Right cardiac atrium (tissue), 5 donors: ENCODE measurements at regions of chr3 and their contacts with region 1.

Region 1: DNA sequence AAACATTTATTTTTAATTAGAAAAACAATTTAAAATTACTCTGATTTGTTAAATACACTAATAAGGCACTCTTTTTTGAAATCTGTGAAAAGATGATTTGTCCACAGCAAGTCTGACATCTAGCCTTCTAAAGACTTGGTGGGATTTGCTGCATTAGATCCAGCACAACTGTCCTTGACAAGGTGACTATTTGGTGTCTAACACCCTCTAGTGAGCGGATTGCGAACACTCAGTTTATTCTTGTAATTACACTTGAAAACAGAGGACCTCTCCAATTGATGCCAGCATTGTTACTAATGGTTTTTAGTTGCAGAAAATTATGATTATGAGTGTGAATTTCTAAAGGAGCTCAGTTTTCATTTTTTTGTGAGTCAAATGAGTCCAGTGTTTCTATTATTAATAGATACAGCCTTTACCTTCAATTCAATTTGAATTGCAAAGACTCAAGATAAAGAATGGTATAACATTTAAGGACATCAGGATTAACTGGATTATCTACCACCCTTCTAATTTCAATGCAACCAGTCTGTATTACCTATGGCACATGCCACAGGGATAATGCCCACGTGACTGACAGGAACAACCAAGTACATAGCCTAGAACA is 29.7 kb upstream of the STRIT1 start:
- DNase-seq: no peak
- ATAC-seq: peak; percentile 57 to 73
- H3K4me3 ChIP-seq: no peak overlapping the region
- H3K27ac ChIP-seq: no peak overlapping the region
- H3K4me1 ChIP-seq: no peaks in the 10 kb centered on the region
- H3K27me3 ChIP-seq: no peaks in the 10 kb centered on the region

Region 2: DNA sequence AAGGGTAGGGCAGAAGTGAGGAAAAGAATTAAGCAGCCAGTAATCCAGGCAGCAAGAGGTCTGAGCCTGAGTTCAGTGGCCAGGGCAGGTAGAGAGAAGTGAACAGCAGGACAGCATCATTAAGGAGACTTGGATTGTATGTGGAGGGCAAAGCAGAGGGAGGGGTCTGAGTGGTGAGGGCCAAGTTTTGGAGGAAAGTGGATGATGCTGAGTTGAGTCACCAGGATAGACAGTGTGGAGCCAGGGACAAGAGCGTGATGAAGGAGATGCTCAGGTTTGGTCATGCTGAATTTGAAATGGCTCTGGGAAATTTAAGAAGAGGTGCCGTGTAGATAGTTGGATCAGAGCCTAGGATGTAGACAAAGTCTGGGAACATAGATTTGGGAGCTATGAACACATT is 1108.9 kb before region 1 on chr3:
- intact Hi-C with region 1: no loop called
- DNase-seq: no peak
- ATAC-seq: no peak
- H3K4me3 ChIP-seq: no peak overlapping the region
- H3K27ac ChIP-seq: no peak overlapping the region
- H3K4me1 ChIP-seq: no peaks in the 10 kb centered on the region
- H3K27me3 ChIP-seq: no peaks in the 10 kb centered on the region

Region 3: GRCh38 chr3:154334973-154335420 is 988.2 kb before region 1 on chr3:
- intact Hi-C with region 1: loop called in 3 of 4 experiments (anchors 10 kb)
- DNase-seq: no peak
- ATAC-seq: no peak
- H3K4me3 ChIP-seq: no peak overlapping the region
- H3K27ac ChIP-seq: no peak overlapping the region
- H3K4me1 ChIP-seq: no peaks in the 10 kb centered on the region
- H3K27me3 ChIP-seq: no peaks in the 10 kb centered on the region

Region 4: DNA sequence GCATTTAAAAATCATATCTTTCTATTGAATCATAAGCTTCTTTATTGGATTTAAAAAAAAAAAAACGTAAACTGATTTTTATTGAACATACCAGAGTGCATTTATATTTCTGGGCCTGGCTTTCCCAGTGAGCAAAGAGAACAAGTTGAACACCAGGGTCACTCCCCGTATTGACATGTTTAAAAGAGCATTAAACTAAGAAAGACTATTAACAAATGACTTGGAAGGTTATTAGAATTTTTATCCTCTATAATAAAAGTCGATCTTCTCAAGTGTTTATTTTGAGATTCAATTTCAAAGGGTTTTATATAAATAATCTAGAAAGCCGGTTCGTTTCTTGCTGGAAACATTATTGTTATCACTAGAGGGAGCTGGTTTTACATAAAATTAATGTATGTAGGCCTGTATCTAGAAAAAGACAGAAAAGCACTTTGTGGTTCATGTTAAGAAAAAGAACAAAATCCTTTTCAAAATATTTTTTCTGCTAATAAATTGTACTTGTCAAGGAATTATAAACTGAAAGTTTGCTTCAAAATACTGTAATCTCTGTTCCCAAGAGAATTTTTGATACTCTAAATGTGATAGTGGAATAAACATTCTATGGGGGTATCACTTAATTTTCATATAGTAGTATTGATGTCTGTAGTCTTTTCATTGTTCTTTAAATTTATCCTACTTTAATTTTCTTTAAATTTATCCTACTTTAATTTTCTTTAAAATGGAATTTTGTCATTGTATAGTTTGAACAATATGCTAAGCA is 564.9 kb before region 1 on chr3:
- intact Hi-C with region 1: loop called in 1 of 4 experiments (anchors 10 kb)
- DNase-seq: no peak
- ATAC-seq: no peak
- H3K4me3 ChIP-seq: no peak overlapping the region
- H3K27ac ChIP-seq: no peak overlapping the region
- H3K4me1 ChIP-seq: no peaks in the 10 kb centered on the region
- H3K27me3 ChIP-seq: no peaks in the 10 kb centered on the region